GM10248 (cell line): ENCODE measurements at regions of chr3 and their contacts with region 1.

Region 1: GRCh38 chr3:168865022-168865551 is 769.4 kb upstream of the GOLIM4 start:
- DNase-seq: peak; percentile 8
- CTCF ChIP-seq: peak; percentile 45

Region 2: DNA sequence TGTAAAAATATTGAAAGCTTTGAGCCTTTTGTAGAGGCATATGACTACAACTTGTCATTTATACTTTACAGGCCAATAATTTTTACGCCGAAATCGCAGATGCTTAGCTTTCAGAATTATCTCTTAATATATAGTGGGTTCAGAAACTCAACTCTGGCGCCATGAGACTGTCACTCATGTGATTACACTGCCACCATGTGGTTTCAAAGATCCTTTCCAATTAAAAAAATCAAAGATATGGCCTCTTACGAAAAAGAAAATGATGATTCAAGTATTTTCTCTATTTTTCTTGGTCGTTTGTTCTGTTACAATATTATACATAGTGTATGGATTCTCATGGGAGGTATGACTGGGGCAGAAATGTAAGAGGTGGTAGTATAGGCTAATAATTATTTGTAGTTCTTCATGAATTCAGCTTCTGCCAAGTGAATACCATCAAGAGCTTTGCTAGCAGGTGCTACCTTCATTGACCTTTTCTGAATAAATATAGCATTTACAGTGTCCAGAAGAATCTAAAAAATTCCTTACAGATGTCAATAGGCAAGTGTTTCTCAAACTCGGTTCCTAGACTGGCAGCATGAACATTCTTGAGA is 17.7 kb before region 1 on chr3:
- CTCF ChIA-PET with region 1: interaction called, 26 read pairs
- POLR2A ChIA-PET with region 1: no interaction called
- DNase-seq: peak; percentile 14
- CTCF ChIP-seq: peak; percentile 46

Region 3: GRCh38 chr3:168878655-168879054 is 13.6 kb after region 1 on chr3:
- CTCF ChIA-PET with region 1: interaction called, 26 read pairs
- POLR2A ChIA-PET with region 1: no interaction called
- DNase-seq: no peak
- CTCF ChIP-seq: no peak